ENCODE measurements at regions of chr11 and their contacts with region 1.

Region 1: DNA sequence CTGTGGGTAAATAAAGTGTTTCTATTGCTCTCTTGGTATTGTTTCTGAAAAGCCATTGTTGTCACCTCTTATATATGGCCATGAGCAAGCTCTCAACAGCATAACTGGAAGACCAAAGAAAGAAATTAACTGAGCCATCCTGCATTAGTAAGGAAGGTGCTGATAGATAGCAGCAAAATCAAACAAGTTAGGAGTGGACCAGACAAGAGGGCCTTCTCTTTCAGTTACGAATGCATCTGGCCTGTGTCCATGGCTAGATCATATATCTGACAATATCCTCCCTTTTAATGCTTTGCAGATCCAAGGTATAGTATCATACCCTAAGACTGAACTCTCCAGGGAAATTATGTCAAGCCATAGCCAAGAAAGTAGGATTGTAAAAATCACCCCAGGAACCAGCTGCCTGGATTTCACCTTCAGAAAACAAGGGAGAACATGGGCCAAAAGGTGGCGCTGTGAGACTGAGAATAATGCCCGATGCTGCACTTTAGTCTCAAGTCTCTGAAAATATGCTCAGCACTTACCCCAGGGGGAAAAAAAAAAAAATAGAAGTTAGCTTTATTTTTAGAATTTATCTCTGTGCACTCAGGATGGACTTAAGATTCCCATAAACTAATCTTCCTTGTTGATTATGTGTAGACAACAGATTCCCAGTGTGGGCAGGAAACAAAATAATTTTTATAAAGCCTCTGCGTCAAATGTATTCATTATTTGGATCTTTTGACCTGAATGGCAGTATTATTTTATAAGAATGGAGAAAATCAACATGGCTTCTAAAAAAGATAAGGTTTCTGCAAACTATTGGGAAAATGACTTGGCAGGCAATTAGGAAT is 415.1 kb downstream of the ETS1 start:
- DNase-seq: peak; percentile 95
- H3K4me3 Mint-ChIP-seq: no peak overlapping the region
- H3K27ac Mint-ChIP-seq: peak overlapping the region; percentile 56
- H3K4me1 Mint-ChIP-seq: peaks cover 25% of the 10 kb centered on the region
- H3K27me3 Mint-ChIP-seq: peaks cover 13% of the 10 kb centered on the region

Region 2: GRCh38 chr11:128506999-128507611 is 334.8 kb after region 1 on chr11:
- intact Hi-C with region 1: loop called (anchors 5 kb)
- DNase-seq: peak; percentile 78
- H3K4me3 Mint-ChIP-seq: peak overlapping the region; percentile 93
- H3K27ac Mint-ChIP-seq: peak overlapping the region; percentile 98
- H3K4me1 Mint-ChIP-seq: peaks cover 93% of the 10 kb centered on the region
- H3K27me3 Mint-ChIP-seq: no peaks in the 10 kb centered on the region

Region 3: GRCh38 chr11:128757235-128757711 is 585.0 kb after region 1 on chr11:
- intact Hi-C with region 1: loop called (anchors 1 kb)
- DNase-seq: peak; percentile 89
- H3K4me3 Mint-ChIP-seq: peak overlapping the region; percentile 37
- H3K27ac Mint-ChIP-seq: peak overlapping the region; percentile 90
- H3K4me1 Mint-ChIP-seq: peaks cover 59% of the 10 kb centered on the region
- H3K27me3 Mint-ChIP-seq: no peaks in the 10 kb centered on the region

Region 4: DNA sequence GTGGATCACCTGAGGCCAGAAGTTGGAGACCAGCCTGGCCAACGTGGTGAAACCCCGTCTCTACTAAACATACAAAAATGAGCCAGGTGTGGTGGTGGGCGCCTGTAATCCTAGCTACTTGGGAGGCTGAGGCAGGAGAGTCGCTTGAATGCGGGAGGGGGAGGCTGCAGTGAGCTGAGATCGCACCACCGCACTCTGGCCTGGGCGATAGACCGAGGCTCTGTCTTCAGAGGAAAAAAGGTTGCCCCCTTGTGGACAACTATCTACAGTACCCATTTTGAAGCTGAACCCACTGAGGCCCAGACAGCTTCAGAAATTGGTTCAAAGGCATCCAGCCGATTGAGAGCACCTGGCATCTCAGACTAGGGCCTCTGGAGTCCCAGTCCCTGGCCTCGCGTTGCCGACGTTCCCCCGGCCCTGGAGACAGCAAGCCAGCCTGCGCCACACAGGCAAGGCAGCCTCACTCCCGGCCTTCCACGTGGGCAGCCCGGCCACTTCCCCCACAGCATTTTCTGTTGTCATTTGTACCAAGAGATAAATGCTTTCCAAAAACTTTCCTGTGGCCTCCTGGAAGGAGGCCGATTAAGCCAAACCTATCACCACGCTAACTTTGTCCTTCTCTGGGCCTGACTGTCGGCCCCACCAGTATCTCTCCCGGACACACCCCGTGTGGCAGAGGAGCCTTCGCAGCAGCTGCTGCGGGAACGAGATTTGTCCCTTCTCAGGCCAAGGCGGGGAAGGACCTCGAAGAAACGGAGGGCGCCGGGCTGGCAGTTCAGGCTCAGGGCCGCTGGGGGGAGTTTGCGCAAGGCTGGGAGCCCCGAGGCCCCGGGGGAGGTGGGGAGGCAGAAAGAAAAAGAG is 604.4 kb after region 1 on chr11:
- intact Hi-C with region 1: loop called (anchors 1 kb)
- DNase-seq: peak; percentile 77
- H3K4me3 Mint-ChIP-seq: no peak overlapping the region
- H3K27ac Mint-ChIP-seq: peak overlapping the region; percentile 74
- H3K4me1 Mint-ChIP-seq: peaks cover 23% of the 10 kb centered on the region
- H3K27me3 Mint-ChIP-seq: no peaks in the 10 kb centered on the region